CD4-positive, alpha-beta memory T cell (primary cell): ENCODE measurements at regions of chr7 and their contacts with region 1.

Region 1: DNA sequence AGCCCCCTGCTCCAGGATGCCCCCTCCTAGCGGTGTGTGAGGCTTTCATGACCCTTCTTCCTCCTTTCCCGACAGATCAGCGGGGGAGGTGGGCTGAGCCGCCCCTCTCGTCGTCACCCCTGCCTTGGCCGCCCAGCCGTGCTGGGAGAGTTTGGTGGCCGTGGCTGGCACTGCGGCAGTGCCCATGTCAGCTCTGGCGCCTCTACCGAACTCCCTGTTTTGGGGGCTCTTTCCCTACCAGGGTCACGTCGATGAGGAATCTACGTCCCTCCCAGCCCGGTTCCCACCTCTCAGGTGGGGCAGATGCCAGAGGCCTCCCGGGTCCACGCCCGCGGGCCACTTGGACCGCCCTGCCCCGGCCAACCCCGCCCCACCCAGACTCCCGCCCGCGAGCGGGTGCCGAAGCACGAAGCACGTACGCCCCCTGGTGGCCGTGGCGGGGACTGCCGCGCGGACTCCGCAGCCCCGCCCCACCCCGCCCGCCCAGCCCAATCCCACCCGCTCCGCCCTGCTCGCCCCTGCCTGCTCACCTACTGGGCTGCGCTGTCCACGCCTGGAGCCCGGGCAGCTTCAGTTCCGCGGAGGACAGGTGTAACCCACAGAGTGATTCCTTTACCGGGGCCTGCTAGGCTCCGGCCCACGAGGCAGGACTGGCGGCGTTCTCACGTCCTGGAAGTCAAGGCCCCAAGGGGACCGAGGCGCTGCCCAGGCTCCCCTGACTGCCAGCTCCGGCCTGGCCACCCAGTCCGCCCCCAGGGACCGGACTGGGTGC is 127.1 kb downstream of the UBE2H start:
- DNase-seq: peak; percentile 79 to 85 (median 82)
- H3K4me3 ChIP-seq: peak overlapping the region in 1 of 2 donors; percentile 52
- H3K4me3 Mint-ChIP-seq: peak overlapping the region; percentile 83 to 92 (median 90)
- H3K27ac ChIP-seq: peak overlapping the region; percentile 40
- H3K27ac Mint-ChIP-seq: peak overlapping the region in 4 of 7 donors; percentile 42 to 80 (median 60)
- H3K4me1 ChIP-seq: peaks cover 22% of the 10 kb centered on the region
- H3K4me1 Mint-ChIP-seq: peaks cover 7 to 29% (median 17%) of the 10 kb centered on the region in 4 donors
- H3K27me3 ChIP-seq: no peaks in the 10 kb centered on the region
- H3K27me3 Mint-ChIP-seq: no peaks in the 10 kb centered on the region

Region 2: GRCh38 chr7:129433847-129434674 is 391.6 kb before region 1 on chr7 and contains the start of gene STRIP2:
- CTCF ChIA-PET with region 1: no interaction called
- POLR2A ChIA-PET with region 1: no interaction called
- intact Hi-C with region 1: loop called (anchors 10 kb)
- DNase-seq: peak; percentile 84 to 90 (median 87)
- H3K4me3 ChIP-seq: peak within 1 kb of the TSS; percentile 85 to 92
- H3K4me3 Mint-ChIP-seq: peak within 1 kb of the TSS; percentile 92 to 98 (median 94)
- H3K27ac ChIP-seq: no peak within 1 kb of the TSS
- H3K27ac Mint-ChIP-seq: peak within 1 kb of the TSS; percentile 37 to 85 (median 71)
- H3K4me1 ChIP-seq: peaks cover 17% of the 10 kb centered on the region
- H3K4me1 Mint-ChIP-seq: peaks cover 3 to 21% (median 15%) of the 10 kb centered on the region in 4 donors
- H3K27me3 ChIP-seq: no peaks in the 10 kb centered on the region
- H3K27me3 Mint-ChIP-seq: peaks cover 5 to 25% of the 10 kb centered on the region in 2 donors
- total RNA-seq, gene STRIP2: 0.20 to 0.22 TPM

Region 3: DNA sequence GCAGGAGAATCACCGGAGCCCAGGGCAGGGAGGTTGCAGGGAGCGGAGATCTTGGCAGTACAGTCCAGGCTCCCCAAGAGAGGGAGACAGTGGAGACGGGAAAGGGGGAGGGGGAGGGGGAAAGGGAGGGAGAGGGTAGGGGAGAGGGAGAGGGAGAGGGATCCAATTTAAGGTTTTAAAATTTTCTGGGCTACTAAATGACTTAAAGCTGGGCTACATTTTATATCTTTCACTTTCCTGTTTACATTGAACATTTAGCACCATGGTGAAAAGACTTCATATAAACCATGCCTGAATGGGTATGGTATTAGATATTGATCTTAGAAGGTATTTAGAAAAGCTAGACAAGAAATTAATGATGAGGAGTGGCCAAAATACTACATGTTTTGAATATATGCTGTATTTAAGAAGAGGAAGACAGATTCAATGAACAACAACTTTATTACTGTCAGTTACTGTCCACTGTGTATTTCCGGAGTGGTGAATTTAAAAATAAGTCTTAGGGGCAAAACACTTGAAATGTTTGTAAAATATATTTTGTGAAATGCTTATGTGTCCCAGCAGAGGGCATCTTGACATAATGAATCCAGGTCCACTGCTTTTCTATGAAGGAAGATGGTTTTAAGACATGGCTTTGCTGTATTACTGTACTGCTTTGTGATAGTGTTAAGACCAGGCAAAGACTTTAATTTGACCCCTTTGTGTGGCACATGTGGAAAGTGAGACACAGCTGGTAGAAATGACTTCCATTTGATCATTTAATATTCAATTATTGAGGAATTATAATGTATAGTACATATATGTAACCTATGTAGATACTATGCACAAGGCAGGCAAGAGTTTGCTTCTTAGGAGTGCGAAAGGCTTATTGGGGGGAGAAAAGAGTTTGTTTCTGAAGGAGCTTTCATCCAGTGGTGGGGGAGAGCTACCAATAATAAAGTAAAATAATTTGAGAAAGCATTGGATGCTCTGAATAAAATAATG is 161.4 kb before region 1 on chr7:
- CTCF ChIA-PET with region 1: interaction called, 4 read pairs
- POLR2A ChIA-PET with region 1: no interaction called
- intact Hi-C with region 1: loop called (anchors 5 kb)
- DNase-seq: peak in 4 of 5 donors; percentile 7 to 13 (median 10)
- H3K4me3 ChIP-seq: no peak overlapping the region
- H3K4me3 Mint-ChIP-seq: no peak overlapping the region
- H3K27ac ChIP-seq: no peak overlapping the region
- H3K27ac Mint-ChIP-seq: peak overlapping the region in 1 of 7 donors; percentile 24
- H3K4me1 ChIP-seq: no peaks in the 10 kb centered on the region
- H3K4me1 Mint-ChIP-seq: peaks cover 5 to 10% (median 7%) of the 10 kb centered on the region in 4 donors
- H3K27me3 ChIP-seq: no peaks in the 10 kb centered on the region
- H3K27me3 Mint-ChIP-seq: no peaks in the 10 kb centered on the region

Region 4: GRCh38 chr7:129952653-129953560 is 127.2 kb after region 1 on chr7 and contains the start of gene UBE2H:
- CTCF ChIA-PET with region 1: interaction called, 8 read pairs
- POLR2A ChIA-PET with region 1: no interaction called
- intact Hi-C with region 1: loop called (anchors 2 kb)
- DNase-seq: peak; percentile 83 to 89 (median 86)
- H3K4me3 ChIP-seq: peak within 1 kb of the TSS; percentile 53 to 85
- H3K4me3 Mint-ChIP-seq: peak within 1 kb of the TSS; percentile 95 to 100 (median 99)
- H3K27ac ChIP-seq: peak within 1 kb of the TSS; percentile 96
- H3K27ac Mint-ChIP-seq: peak within 1 kb of the TSS in 6 of 7 donors; percentile 94 to 100 (median 100)
- H3K4me1 ChIP-seq: peaks cover 42% of the 10 kb centered on the region
- H3K4me1 Mint-ChIP-seq: peaks cover 5 to 16% (median 7%) of the 10 kb centered on the region in 4 donors
- H3K27me3 ChIP-seq: no peaks in the 10 kb centered on the region
- H3K27me3 Mint-ChIP-seq: peaks cover 0 to 2% of the 10 kb centered on the region in 2 donors
- total RNA-seq, gene UBE2H: 42.6 to 43.8 TPM

Region 5: DNA sequence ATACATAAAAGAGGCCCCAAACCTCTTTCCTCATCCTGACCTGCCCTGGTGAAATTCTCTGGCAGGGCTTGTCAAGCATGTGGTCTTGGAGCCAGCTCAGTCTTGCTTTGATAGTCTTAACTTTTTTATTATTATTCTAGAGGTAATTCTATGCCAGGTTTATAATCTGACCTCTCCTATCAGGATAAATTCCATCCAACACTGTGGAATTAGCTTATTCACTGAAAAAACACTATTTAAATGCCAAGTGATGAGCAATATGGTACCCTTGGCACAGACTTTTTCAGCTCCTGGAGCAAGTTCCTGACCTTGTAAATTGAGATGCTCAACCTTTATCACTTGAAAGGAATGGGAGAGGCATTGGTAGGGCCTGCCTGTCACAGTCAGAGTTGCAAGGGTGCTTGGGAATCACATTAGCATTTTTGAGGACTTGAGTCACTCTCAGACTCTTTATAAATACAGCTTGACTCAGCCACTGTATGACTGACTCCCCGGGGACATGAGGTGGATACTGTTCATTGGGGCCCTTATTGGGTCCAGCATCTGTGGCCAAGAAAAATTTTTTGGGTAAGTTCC is 467.1 kb after region 1 on chr7 and contains the start of gene CPA4:
- CTCF ChIA-PET with region 1: no interaction called
- POLR2A ChIA-PET with region 1: no interaction called
- intact Hi-C with region 1: no loop called
- DNase-seq: no peak
- H3K4me3 ChIP-seq: no peak within 1 kb of the TSS
- H3K4me3 Mint-ChIP-seq: no peak within 1 kb of the TSS
- H3K27ac ChIP-seq: no peak within 1 kb of the TSS
- H3K27ac Mint-ChIP-seq: no peak within 1 kb of the TSS
- H3K4me1 ChIP-seq: no peaks in the 10 kb centered on the region
- H3K4me1 Mint-ChIP-seq: peaks cover 0 to 1% (median 0%) of the 10 kb centered on the region in 4 donors
- H3K27me3 ChIP-seq: no peaks in the 10 kb centered on the region
- H3K27me3 Mint-ChIP-seq: peaks cover 1 to 4% of the 10 kb centered on the region in 2 donors
- total RNA-seq, gene CPA4: not detected